PC-3 (cell line): ENCODE measurements at regions of chr3 and their contacts with region 1.

Region 1: DNA sequence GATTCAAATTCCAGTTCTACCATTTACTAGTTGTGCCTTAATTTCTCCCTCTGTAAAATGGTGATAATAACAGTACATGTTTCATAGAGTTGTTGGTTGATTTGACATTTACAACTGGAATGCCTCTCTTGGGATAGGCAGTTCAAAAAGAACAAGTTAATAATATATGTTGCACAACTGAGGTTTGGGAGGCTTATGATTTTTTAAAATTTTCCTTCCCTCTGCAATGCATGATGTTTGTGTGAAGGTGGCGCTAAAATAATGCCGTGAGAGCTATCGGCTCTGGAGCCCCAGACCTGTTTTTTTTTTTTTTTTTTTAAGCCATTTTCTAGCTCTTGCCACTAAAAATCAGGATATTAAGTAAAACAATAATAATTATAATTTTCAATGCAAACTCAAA is 18.6 kb downstream of the DNAJB11 start:
- DNase-seq: no peak
- ATAC-seq: peak; percentile 9; the same call in 1 of the 2 replicates
- H3K4me3 ChIP-seq: peak overlapping the region; percentile 25
- H3K27ac ChIP-seq: peak overlapping the region; percentile 49
- H3K4me1 ChIP-seq: peaks cover 28% of the 10 kb centered on the region
- H3K27me3 ChIP-seq: no peaks in the 10 kb centered on the region
- CTCF ChIP-seq: peak; percentile 51; the same call in 1 of the 2 replicates

Region 2: DNA sequence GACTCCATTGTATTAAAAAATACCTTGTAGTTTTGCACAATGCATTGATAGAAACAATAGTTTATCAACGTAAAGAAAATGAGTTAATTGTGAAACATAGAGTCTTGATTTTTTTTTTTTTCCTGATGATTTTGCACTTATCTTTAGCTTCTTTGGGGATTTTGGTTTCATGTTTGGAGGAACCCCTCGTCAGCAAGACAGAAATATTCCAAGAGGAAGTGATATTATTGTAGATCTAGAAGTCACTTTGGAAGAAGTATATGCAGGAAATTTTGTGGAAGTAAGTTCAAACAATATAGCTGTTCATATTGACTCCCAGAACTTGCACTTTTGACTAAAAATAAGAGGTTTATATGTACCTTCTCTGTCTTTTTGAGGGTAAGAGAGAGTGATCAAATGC is 11.6 kb before region 1 on chr3:
- CTCF ChIA-PET with region 1: interaction called, 12 read pairs
- POLR2A ChIA-PET with region 1: interaction called, 12 read pairs
- intact Hi-C with region 1: no loop called
- DNase-seq: no peak
- ATAC-seq: no peak
- H3K4me3 ChIP-seq: no peak overlapping the region
- H3K27ac ChIP-seq: no peak overlapping the region
- H3K4me1 ChIP-seq: no peaks in the 10 kb centered on the region
- H3K27me3 ChIP-seq: no peaks in the 10 kb centered on the region
- CTCF ChIP-seq: no peak

Region 3: DNA sequence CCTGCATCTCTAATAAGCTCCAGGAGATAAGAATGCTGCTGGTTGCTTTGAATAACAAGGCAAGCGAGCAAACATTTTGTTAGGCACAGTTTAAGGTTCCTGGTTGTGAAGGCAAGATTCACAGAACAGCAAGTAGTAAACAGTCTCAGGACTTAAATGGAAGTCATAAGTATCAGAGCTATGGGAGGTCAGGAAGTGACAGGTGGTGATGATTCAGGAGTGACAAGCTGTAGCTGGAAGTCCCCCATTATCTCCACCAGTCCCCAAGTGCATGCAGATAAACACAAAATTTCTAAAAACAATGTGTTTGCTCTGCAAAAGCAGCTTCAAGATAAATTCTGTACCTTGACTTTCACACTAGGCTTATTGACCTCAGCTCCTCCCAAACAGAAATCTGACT is 54.4 kb after region 1 on chr3:
- CTCF ChIA-PET with region 1: no interaction called
- POLR2A ChIA-PET with region 1: no interaction called
- intact Hi-C with region 1: no loop called
- DNase-seq: peak; percentile 31
- ATAC-seq: no peak
- H3K4me3 ChIP-seq: no peak overlapping the region
- H3K27ac ChIP-seq: no peak overlapping the region
- H3K4me1 ChIP-seq: peaks cover 18% of the 10 kb centered on the region
- H3K27me3 ChIP-seq: no peaks in the 10 kb centered on the region
- CTCF ChIP-seq: no peak